CD4-positive, alpha-beta T cell (primary cell): ENCODE measurements at regions of chr18 and their contacts with region 1.

Region 1: DNA sequence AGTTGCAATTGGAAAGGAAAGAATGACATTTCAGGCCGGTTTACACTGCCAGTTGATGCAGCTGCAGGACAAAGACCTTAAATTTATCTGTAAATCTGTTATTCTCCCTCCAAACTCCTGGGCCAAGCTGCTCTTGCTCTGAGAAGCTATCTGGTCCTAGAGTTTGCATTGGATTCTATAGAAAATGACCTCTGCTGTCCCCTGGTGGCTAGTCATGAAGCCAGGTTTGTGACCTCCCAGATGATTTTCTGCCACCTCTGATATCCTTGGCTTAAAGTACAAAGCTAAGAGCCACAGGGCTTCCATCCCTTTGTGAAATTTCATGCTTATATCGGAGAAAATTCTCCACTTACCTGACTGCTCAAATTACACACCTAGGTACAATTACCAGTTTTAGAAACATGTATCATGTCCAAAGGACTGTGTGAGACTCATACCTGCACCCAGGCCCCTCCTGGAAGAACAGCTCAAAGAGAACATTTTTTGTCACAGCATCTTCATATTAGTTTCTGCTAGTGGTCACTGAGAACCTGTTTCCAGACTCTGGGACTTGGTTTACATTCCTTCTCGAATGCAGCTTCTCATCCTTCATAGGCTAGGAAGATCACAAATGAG is 28.9 kb upstream of the IER3IP1 start:
- DNase-seq: peak in 12 of 14 experiments; percentile 7 to 64 (median 27)
- ATAC-seq: no peak
- H3K4me3 ChIP-seq: no peak overlapping the region
- H3K4me3 Mint-ChIP-seq: no peak overlapping the region
- H3K27ac ChIP-seq: no peak overlapping the region
- H3K27ac Mint-ChIP-seq: no peak overlapping the region
- H3K4me1 ChIP-seq: no peaks in the 10 kb centered on the region
- H3K4me1 Mint-ChIP-seq: no peaks in the 10 kb centered on the region
- H3K27me3 ChIP-seq: peaks cover 9 to 10% of the 10 kb centered on the region in 2 experiments
- H3K27me3 Mint-ChIP-seq: peaks cover 49% of the 10 kb centered on the region
- CTCF ChIP-seq: peak; percentile 69

Region 2: DNA sequence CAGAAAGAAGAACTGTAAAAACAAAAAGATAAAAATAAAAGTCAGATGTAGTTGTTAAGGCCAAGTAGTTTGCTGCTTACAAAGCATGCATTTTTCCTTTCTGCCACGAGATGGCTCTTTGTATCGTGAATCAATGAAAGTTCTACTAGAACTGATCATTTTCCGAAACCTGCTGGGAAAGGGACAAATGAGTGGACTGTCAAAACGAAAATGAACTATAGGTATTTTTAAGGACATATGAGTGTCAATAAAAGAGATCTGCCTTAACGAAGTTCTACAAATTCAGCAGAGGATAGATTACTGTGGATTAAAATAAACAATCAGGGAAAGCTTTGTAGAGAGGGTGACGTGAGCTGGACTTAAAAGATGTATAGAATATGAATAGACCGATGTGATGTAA is 154.5 kb before region 1 on chr18:
- CTCF ChIA-PET with region 1: no interaction called
- POLR2A ChIA-PET with region 1: no interaction called
- intact Hi-C with region 1: loop called in 1 of 2 experiments (anchors 5 kb)
- DNase-seq: peak in 4 of 14 experiments; percentile 11 to 48 (median 30)
- ATAC-seq: no peak
- H3K4me3 ChIP-seq: no peak overlapping the region
- H3K4me3 Mint-ChIP-seq: no peak overlapping the region
- H3K27ac ChIP-seq: no peak overlapping the region
- H3K27ac Mint-ChIP-seq: no peak overlapping the region
- H3K4me1 ChIP-seq: no peaks in the 10 kb centered on the region
- H3K4me1 Mint-ChIP-seq: no peaks in the 10 kb centered on the region
- H3K27me3 ChIP-seq: no peaks in the 10 kb centered on the region
- H3K27me3 Mint-ChIP-seq: no peaks in the 10 kb centered on the region
- CTCF ChIP-seq: peak; percentile 66

Region 3: GRCh38 chr18:47100214-47100831 is 104.7 kb before region 1 on chr18:
- CTCF ChIA-PET with region 1: interaction called, 14 read pairs
- POLR2A ChIA-PET with region 1: no interaction called
- intact Hi-C with region 1: loop called (anchors 1 kb)
- DNase-seq: peak; percentile 31 to 70 (median 50)
- ATAC-seq: peak; percentile 49
- H3K4me3 ChIP-seq: no peak overlapping the region
- H3K4me3 Mint-ChIP-seq: no peak overlapping the region
- H3K27ac ChIP-seq: no peak overlapping the region
- H3K27ac Mint-ChIP-seq: no peak overlapping the region
- H3K4me1 ChIP-seq: no peaks in the 10 kb centered on the region
- H3K4me1 Mint-ChIP-seq: no peaks in the 10 kb centered on the region
- H3K27me3 ChIP-seq: no peaks in the 10 kb centered on the region
- H3K27me3 Mint-ChIP-seq: no peaks in the 10 kb centered on the region
- CTCF ChIP-seq: peak; percentile 86

Region 4: GRCh38 chr18:47669815-47670214 is 464.8 kb after region 1 on chr18:
- CTCF ChIA-PET with region 1: no interaction called
- POLR2A ChIA-PET with region 1: no interaction called
- intact Hi-C with region 1: no loop called
- DNase-seq: no peak
- ATAC-seq: no peak
- H3K4me3 ChIP-seq: no peak overlapping the region
- H3K4me3 Mint-ChIP-seq: no peak overlapping the region
- H3K27ac ChIP-seq: no peak overlapping the region
- H3K27ac Mint-ChIP-seq: no peak overlapping the region
- H3K4me1 ChIP-seq: no peaks in the 10 kb centered on the region
- H3K4me1 Mint-ChIP-seq: no peaks in the 10 kb centered on the region
- H3K27me3 ChIP-seq: no peaks in the 10 kb centered on the region
- H3K27me3 Mint-ChIP-seq: peaks cover 13% of the 10 kb centered on the region
- CTCF ChIP-seq: no peak